H1 (cell line): ENCODE measurements at regions of chr4 and their contacts with region 1.

Region 1: GRCh38 chr4:38062088-38062893 is 102.1 kb downstream of the PTTG2 start:
- DNase-seq: peak; percentile 54 to 84
- H3K4me3 ChIP-seq: no peak overlapping the region
- H3K27ac ChIP-seq: no peak overlapping the region
- H3K4me1 ChIP-seq: peaks cover 0 to 2% (median 0%) of the 10 kb centered on the region in 4 experiments; a peak in 3 of 7 replicates
- H3K27me3 ChIP-seq: no peaks in the 10 kb centered on the region
- CTCF ChIP-seq: peak; percentile 71 to 77 (median 72)
- EP300 ChIP-seq: no peak
- POLR2A ChIP-seq: no peak
- RAD21 ChIP-seq: peak; percentile 86 to 87

Region 2: DNA sequence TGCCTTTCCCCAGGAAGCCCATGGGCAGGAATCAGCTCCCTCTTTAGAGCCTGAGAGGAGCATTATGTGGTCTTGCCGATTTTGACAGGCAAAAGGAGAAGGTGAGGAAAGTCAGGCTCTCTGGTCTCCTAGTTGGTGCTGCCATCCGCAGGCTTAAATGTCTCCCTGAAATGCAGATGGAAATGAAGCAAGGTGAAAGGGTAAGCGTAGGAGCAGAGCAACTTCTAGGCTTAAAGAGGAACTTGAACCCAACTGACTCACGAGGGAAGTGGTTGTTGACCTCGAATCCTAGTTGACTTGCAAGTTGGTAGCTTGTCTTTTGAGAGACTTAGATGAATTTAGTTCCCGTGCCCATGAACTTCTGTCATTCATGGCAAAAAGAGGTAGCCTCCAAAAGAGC is 103.8 kb after region 1 on chr4:
- CTCF ChIA-PET with region 1: interaction called, 11 read pairs
- POLR2A ChIA-PET with region 1: no interaction called
- DNase-seq: no peak
- H3K4me3 ChIP-seq: no peak overlapping the region
- H3K27ac ChIP-seq: no peak overlapping the region
- H3K4me1 ChIP-seq: peaks cover 0 to under 1% (median 0%) of the 10 kb centered on the region in 4 experiments; a peak in 1 of 7 replicates
- H3K27me3 ChIP-seq: peaks cover 0 to 2% (median under 1%) of the 10 kb centered on the region in 4 experiments; a peak in 2 of 7 replicates
- CTCF ChIP-seq: peak; percentile 30 to 67 (median 58)
- EP300 ChIP-seq: no peak
- POLR2A ChIP-seq: no peak
- RAD21 ChIP-seq: peak; percentile 78 to 86